ENCODE measurements at regions of chr9 and their contacts with region 1.

Region 1: DNA sequence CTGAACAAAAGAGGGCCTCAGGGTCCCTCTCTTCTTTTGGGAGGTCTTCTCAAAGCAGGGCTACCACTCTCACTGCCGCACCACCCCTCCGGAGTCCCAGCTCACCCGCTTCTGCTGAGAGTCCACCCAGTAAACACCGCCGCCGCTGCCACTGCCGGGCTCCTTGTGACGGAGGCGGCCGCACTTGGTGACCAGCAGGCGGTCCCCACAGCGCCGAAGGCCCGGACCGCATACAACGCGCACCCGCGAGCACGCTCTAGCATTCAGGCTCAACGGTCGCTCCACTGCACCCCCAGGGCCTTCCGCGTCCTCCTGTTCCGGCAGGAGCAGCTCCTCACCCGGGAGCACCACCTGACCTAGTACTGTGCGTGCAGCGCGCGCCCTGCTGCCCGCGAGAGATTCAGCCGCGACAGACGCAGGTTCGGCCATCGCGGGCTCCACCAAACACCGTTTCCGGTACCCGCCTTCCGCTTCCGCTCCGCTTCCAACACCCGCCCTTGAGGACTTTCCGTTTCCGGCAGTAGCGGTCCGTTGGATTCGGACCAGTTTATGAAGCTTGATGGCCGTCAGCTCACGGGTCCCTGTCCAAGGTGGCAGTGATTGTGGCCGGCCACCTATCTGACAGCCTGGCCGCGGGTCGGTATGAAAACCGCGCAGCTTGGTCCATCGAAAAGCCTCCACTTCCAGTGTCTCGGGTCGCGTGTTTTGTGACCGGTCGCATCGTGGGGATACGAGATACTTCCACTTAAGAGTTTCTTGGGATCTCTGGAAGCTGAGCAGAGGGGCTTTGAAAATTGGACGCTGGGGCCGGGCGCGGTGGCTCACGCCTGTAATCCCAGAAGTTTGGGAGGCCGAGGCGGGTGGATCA is at the start of gene EXOSC3:
- DNase-seq: peak; percentile 77 to 89 (median 81)
- H3K4me3 ChIP-seq: peak within 1 kb of the TSS; percentile 95
- H3K27ac ChIP-seq: peak within 1 kb of the TSS; percentile 58 to 65
- H3K4me1 ChIP-seq: peaks cover 4% of the 10 kb centered on the region
- H3K27me3 ChIP-seq: no peaks in the 10 kb centered on the region
- CTCF ChIP-seq: no peak
- EP300 ChIP-seq: no peak
- POLR2A ChIP-seq: peak; percentile 43
- total RNA-seq, gene EXOSC3: 28.8 to 40.0 (median 35.2) TPM

Region 2: DNA sequence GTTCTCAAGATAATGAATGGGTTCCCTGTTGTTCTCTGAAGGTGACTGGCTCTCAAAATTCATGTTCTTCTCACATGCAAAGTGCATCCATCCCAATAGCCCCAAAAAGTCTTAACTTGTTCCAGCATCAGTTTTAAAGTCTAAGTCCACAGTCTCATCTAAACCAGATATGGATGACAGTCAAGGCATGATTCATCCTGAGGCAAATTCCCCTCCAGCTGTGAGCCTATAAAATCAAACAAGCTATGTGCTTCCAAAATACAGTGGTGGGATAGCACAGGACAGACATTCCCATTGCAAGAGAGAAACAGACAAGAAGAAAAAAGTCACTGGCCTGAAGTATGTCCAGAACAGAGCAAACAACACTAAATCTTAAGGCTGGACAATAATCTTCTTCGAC is 234.1 kb before region 1 on chr9:
- intact Hi-C with region 1: loop called in 1 of 4 experiments (anchors 5 kb)
- DNase-seq: no peak
- H3K4me3 ChIP-seq: no peak overlapping the region
- H3K27ac ChIP-seq: no peak overlapping the region
- H3K4me1 ChIP-seq: no peaks in the 10 kb centered on the region
- H3K27me3 ChIP-seq: no peaks in the 10 kb centered on the region
- CTCF ChIP-seq: no peak
- EP300 ChIP-seq: no peak
- POLR2A ChIP-seq: no peak

Region 3: DNA sequence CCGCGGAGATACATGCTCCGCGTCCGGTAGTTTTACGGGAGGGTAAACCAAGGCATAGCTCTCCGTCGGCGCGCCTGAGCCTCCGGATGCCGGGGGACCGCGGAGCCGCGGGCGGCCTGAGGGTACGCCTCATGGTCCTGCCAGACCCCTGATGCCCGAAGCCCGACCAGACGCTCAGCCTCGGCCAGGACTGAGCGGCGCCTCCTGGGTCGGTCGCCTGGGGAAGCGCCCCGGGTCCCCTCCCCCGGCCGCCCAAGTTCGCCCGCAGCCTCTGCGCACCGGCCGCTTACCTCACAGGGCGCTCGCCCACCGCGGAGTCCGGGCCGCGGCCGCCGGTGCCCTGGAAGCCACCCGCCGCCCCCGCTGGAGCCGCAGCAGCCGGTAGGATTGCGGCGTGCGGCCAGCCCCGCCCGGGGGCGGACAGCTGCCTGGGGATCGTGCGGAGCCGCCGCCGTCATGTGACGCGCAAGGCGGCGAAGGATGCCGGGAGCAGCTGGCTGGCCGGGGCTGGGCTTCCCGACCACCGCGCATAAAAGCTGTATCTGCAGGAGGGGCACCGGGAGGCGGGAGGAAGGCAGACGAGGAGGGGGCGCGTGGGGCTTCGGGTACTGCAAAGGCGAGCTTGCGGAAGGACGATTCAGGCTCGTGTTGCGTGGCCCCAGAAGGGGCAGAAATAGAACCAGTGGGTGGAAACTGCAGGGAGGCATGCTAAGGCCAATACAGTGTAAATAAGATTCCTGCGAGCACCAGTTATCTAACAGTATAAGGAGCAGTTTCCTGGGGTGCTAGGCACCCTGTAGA is 208.7 kb before region 1 on chr9 and contains the start of gene FBXO10:
- intact Hi-C with region 1: loop called in 1 of 4 experiments (anchors 10 kb)
- DNase-seq: peak; percentile 61 to 82 (median 70)
- H3K4me3 ChIP-seq: peak within 1 kb of the TSS; percentile 54
- H3K27ac ChIP-seq: peak within 1 kb of the TSS; percentile 25 to 53
- H3K4me1 ChIP-seq: peaks cover 4% of the 10 kb centered on the region
- H3K27me3 ChIP-seq: no peaks in the 10 kb centered on the region
- CTCF ChIP-seq: no peak
- EP300 ChIP-seq: no peak
- POLR2A ChIP-seq: no peak
- total RNA-seq, gene FBXO10: 3.0 to 7.2 (median 4.7) TPM

Region 4: GRCh38 chr9:37760416-37761161 is 24.3 kb before region 1 on chr9:
- intact Hi-C with region 1: no loop called
- DNase-seq: no peak
- H3K4me3 ChIP-seq: no peak overlapping the region
- H3K27ac ChIP-seq: no peak overlapping the region
- H3K4me1 ChIP-seq: no peaks in the 10 kb centered on the region
- H3K27me3 ChIP-seq: no peaks in the 10 kb centered on the region
- CTCF ChIP-seq: no peak
- EP300 ChIP-seq: no peak
- POLR2A ChIP-seq: no peak

Region 5: GRCh38 chr9:37859043-37859442 is 74.2 kb after region 1 on chr9:
- intact Hi-C with region 1: loop called in 1 of 4 experiments (anchors 10 kb)
- DNase-seq: no peak
- H3K4me3 ChIP-seq: no peak overlapping the region
- H3K27ac ChIP-seq: no peak overlapping the region
- H3K4me1 ChIP-seq: no peaks in the 10 kb centered on the region
- H3K27me3 ChIP-seq: no peaks in the 10 kb centered on the region
- CTCF ChIP-seq: no peak
- EP300 ChIP-seq: no peak
- POLR2A ChIP-seq: no peak

Region 6: DNA sequence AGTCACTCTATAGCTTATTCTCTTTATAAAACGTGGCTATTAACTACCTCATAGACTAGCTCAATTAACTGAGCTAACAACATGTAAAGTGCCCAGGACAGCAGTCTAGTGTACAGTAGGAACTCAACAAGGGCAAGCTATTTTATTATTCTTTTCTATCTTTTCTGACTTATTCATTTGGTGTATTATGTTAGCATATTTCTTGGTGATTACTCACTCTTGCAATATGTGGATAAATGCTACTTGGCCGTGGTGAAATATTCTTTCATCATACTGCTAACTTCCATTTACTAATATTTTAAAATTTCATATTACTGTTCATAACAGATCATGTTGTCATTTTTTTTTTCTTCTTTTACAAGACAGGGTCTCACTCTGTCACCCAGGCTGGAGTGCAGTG is 114.2 kb after region 1 on chr9:
- intact Hi-C with region 1: loop called in 1 of 4 experiments (anchors 10 kb)
- DNase-seq: no peak
- H3K4me3 ChIP-seq: no peak overlapping the region
- H3K27ac ChIP-seq: no peak overlapping the region
- H3K4me1 ChIP-seq: peaks cover 2% of the 10 kb centered on the region
- H3K27me3 ChIP-seq: no peaks in the 10 kb centered on the region
- CTCF ChIP-seq: no peak
- EP300 ChIP-seq: no peak
- POLR2A ChIP-seq: no peak

Measured in ovary (tissue), 10 donors.